ENCODE measurements at regions of chr2 and their contacts with region 1.

Region 1: DNA sequence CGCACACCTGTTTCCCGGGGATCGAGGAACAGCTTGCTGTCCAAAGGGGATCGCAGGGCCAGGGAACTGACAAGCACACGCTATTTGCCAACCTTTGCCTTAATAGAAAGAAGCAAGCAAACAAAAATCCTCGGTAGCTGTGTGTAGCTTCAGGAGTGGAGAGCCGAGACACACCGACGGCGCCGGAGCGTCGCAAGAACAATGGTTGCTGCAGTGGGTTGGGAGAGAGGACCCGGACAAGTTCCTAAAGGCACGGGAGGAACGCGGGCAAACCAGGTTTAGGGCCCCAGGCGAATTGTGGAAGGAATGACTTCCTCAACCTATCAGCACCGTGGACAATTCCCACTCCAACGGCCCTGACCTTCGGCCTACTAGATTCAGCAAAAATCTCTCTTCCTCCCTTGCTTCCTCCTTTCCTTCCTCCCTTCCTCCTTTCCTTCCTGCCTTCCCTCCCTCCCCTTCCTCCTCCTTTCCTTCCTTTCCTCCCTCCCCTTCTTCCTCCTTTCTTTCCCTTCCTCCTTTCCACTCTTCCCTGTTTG is 4.9 kb upstream of the NEUROD1 start:
- DNase-seq: no peak
- ATAC-seq: no peak
- H3K4me3 ChIP-seq: no peak overlapping the region
- H3K27ac ChIP-seq: no peak overlapping the region
- H3K4me1 ChIP-seq: no peaks in the 10 kb centered on the region
- H3K27me3 ChIP-seq: peaks cover 8% of the 10 kb centered on the region
- CTCF ChIP-seq: no peak

Region 2: DNA sequence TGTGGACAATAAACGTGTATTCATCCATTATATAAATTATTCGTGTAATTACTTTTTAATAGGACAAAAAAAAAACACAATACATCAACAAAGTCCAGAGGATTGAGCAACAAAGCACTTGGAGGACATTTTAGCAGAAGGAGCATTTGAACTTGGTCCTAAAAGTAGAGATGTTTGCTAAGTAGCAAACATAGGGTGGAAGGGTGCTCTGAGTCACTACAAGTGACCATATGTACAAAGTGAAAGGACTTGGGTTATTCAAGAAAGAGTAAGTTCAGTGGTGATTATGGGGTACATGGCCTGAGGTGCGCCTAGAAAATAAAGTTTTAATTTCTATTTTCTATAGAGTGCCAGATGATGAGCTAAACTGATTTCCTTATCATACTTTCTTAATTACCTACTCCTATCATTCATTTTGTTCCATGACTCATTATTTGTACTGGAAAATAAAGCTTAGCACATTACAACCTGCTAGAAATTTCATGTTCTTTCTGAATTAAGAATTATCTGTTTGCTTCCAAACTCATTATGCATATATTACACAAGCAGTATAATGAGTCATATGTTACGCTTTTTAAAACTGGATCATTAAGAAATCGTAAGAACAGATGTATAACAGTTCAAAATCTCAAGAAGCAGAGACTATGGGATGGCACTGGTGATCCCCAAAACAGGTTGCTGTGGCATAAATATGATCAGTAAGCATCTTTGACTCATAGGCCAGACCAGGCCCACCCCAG is 287.4 kb after region 1 on chr2:
- CTCF ChIA-PET with region 1: interaction called, 19 read pairs
- POLR2A ChIA-PET with region 1: no interaction called
- in situ Hi-C with region 1: no loop called
- intact Hi-C with region 1: no loop called
- DNase-seq: no peak
- ATAC-seq: no peak
- H3K4me3 ChIP-seq: no peak overlapping the region
- H3K27ac ChIP-seq: no peak overlapping the region
- H3K4me1 ChIP-seq: no peaks in the 10 kb centered on the region
- H3K27me3 ChIP-seq: no peaks in the 10 kb centered on the region
- CTCF ChIP-seq: no peak